Testis (tissue), 5 donors: ENCODE measurements at regions of chr4 and their contacts with region 1.

Region 1: GRCh38 chr4:75673027-75673958 is at the start of gene G3BP2:
- DNase-seq: peak; percentile 98
- H3K4me3 ChIP-seq: peak within 1 kb of the TSS; percentile 97 to 99
- H3K27ac ChIP-seq: peak within 1 kb of the TSS; percentile 92 to 98
- H3K4me1 ChIP-seq: peaks cover 4% of the 10 kb centered on the region
- H3K27me3 ChIP-seq: no peaks in the 10 kb centered on the region
- CTCF ChIP-seq: no peak
- POLR2A ChIP-seq: peak; percentile 73
- total RNA-seq, gene G3BP2: 102 to 105 TPM

Region 2: DNA sequence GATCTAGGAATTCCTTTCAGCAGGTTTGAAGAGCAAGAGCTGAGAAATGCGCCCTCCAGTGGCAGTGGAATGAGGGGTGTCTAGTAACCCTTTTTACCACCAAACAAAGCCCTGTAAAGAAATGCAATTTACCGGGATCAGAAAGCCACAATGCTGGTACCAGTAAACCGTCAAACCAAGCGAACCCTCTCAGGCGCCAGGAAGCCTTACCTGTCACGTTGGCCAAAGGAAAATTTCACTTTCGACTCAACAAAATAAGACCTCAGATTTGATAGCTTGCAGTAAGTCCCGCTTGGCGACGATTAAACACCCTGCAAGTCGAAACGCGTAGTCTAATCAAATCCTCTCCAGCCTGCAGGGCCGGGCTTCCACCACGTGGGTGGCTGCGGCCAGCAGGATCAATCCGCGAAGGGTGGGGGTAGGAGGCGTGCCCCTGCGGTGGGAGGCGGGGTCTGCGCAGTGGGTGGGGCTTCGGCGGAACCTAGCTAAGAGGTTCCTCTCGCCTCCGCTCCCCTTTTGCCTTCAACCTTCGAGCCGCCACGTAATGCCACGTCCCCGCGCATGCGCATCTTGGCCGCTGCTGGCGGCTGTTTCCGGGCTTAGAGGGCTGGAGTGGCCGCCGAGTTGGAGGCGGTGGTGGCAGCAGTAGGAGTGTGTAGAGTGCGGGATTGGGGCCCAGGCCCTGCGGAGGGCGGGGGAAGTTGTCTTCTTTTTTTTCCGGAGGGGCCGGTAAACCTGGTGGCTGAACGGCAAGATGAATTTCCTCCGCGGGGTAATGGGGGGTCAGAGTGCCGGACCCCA is 51.0 kb after region 1 on chr4 and contains the start of gene USO1:
- intact Hi-C with region 1: loop called (anchors 10 kb)
- DNase-seq: peak; percentile 99
- H3K4me3 ChIP-seq: peak within 1 kb of the TSS; percentile 73 to 88
- H3K27ac ChIP-seq: peak within 1 kb of the TSS; percentile 96 to 98
- H3K4me1 ChIP-seq: peaks cover 25% of the 10 kb centered on the region
- H3K27me3 ChIP-seq: no peaks in the 10 kb centered on the region
- CTCF ChIP-seq: peak; percentile 49 to 72 (median 58)
- POLR2A ChIP-seq: peak; percentile 83
- total RNA-seq, gene USO1: 57.5 to 64.6 TPM

Region 3: GRCh38 chr4:75916091-75916661 is 242.9 kb after region 1 on chr4:
- intact Hi-C with region 1: no loop called
- DNase-seq: peak; percentile 23
- H3K4me3 ChIP-seq: no peak overlapping the region
- H3K27ac ChIP-seq: no peak overlapping the region
- H3K4me1 ChIP-seq: no peaks in the 10 kb centered on the region
- H3K27me3 ChIP-seq: no peaks in the 10 kb centered on the region
- CTCF ChIP-seq: peak; percentile 28 to 75 (median 57)
- POLR2A ChIP-seq: no peak